ENCODE measurements at regions of chr12 and their contacts with region 1.

Region 1: GRCh38 chr12:53441040-53441833 is at the start of gene PRR13:
- DNase-seq: peak; percentile 99
- H3K4me3 ChIP-seq: peak within 1 kb of the TSS; percentile 67
- H3K27me3 ChIP-seq: no peaks in the 10 kb centered on the region
- CTCF ChIP-seq: no peak
- polyA plus RNA-seq, gene PRR13: 66.4 and 73.2 TPM in 2 replicates

Region 2: GRCh38 chr12:53180220-53180930 is 260.9 kb before region 1 on chr12 and contains the starts of genes CSAD and ZNF740:
- CTCF ChIA-PET with region 1: no interaction called
- POLR2A ChIA-PET with region 1: no interaction called
- DNase-seq: peak; percentile 83
- H3K4me3 ChIP-seq: peak within 1 kb of the TSS; percentile 86
- H3K27me3 ChIP-seq: no peaks in the 10 kb centered on the region
- CTCF ChIP-seq: no peak
- polyA plus RNA-seq, gene CSAD: 27.3 and 30.7 TPM in 2 replicates
- polyA plus RNA-seq, gene ZNF740: 15.7 and 16.8 TPM in 2 replicates

Region 3: DNA sequence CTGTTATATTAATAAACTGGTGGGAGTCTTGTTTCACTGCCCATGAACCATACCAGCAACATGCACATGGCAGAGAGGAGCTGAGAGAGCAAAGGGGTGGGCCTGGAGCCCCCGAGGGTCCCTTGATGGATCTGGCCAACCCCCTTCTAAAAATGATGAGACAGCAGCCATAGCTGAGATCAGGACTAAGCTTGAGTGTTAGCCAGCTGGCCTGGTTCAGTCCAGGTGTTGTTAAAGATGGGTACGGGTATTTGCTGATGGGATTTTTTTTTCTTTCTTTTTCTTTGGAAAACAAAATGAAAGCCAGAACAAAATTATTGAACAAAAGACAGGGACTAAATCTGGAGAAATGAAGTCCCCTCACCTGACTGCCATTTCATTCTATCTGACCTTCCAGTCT is 26.6 kb after region 1 on chr12:
- CTCF ChIA-PET with region 1: no interaction called
- POLR2A ChIA-PET with region 1: interaction called, 16 read pairs
- DNase-seq: no peak
- H3K4me3 ChIP-seq: no peak overlapping the region
- H3K27me3 ChIP-seq: no peaks in the 10 kb centered on the region
- CTCF ChIP-seq: no peak

Region 4: GRCh38 chr12:54201001-54201794 is 760.0 kb after region 1 on chr12:
- CTCF ChIA-PET with region 1: no interaction called
- POLR2A ChIA-PET with region 1: no interaction called
- DNase-seq: no peak
- H3K4me3 ChIP-seq: no peak overlapping the region
- H3K27me3 ChIP-seq: peaks cover 10% of the 10 kb centered on the region
- CTCF ChIP-seq: peak; percentile 96

Measured in BJ (cell line).